A673 (cell line): ENCODE measurements at regions of chr4 and their contacts with region 1.

Region 1: DNA sequence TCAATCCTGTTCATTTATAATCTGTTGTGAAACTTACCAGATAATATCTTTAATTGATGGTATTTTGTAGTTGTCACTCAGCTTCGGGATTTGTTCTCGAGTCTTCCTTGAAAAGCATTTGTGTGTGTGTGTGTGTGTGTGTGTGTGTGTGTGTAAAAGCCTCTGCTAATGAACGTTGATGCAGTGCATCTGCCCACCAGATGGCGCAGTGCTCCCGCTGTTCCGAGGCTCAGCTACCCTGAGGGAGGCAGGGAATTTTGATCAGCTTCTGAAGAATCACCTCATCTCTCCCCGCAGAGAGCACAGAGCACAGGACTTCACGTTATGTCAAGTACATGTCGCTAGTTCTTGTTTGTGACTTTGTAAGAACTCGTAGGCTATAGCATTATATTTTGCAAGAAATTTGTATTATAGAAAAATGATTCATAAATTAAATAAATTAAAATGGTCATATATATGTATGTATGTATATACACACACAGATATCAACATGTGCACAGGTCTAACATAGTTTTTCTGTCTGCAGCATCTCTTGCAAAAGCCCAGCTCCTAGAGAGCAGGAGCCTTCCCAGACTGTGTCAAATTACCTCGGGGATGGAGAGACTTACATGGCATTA is 316.7 kb upstream of the IGFBP7 start:
- DNase-seq: peak; percentile 50
- H3K4me3 ChIP-seq: no peak overlapping the region
- H3K27ac ChIP-seq: no peak overlapping the region
- H3K4me1 ChIP-seq: no peaks in the 10 kb centered on the region
- H3K27me3 ChIP-seq: no peaks in the 10 kb centered on the region
- CTCF ChIP-seq: peak; percentile 67

Region 2: DNA sequence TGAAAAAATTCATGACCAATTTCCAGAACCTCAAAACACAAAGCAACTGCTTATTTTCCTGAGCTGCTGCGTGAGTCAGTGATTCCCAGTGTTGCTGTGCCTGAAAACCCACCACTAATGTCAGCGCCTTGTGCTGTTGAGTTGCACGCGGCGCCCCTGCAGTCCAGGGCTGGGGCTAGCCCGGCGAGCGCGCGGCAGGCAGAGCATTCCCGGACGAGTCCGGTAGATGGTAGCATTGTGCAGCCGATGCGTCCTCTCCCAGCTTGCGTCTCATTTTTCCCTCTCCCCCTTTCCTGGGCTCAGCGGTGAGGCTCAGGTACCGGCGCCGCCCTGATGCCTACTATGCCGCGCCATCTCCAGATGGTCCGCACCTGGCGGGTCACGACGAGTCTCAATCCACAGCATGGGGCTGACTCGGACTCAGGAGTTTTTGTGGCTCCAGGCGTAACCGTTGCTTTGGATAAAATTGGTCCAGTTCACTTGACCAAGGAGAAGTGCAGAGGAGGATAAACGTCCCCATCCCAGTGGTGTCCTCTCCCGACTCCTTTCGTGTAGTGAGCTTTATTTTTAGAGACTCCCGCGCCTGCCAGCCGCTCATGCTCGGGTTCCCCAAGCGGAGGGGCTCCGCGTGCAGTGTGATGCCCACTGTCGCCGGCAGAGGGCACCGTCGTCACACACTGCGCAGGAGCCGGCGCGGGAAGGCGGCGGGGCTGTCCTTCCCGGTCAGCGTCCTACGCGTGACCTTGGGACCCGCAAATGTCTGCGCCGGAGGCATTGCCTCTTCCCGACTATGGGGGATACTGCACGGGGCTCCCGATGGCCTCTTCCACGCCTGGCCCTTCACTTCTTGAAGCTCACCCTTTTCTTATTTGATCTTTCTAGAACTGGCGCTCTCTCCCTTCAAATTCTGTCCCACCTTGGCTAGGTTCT is 263.1 kb before region 1 on chr4:
- CTCF ChIA-PET with region 1: no interaction called
- POLR2A ChIA-PET with region 1: no interaction called
- intact Hi-C with region 1: loop called (anchors 10 kb)
- DNase-seq: peak; percentile 72
- H3K4me3 ChIP-seq: peak overlapping the region; percentile 43
- H3K27ac ChIP-seq: no peak overlapping the region
- H3K4me1 ChIP-seq: no peaks in the 10 kb centered on the region
- H3K27me3 ChIP-seq: peaks cover 3% of the 10 kb centered on the region
- CTCF ChIP-seq: peak; percentile 64

Region 3: DNA sequence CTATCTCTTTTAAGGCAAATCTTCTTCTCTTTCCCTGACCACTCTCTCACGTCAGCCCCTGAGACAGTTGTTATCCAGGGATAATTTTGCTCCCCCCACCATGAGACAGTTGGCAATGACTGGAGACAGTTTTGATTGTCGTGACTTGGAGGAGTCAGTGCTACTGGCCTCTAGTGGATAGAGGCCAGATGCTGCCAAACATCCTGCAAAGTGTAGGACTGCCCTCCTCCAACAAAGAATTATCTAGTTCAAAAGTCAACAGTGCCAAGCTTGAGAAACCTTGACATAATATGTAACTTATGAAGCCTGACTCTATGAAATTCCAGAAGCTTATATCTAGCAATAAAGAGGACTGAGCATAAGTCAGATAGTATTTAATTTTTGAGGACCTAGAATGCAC is 185.4 kb after region 1 on chr4:
- CTCF ChIA-PET with region 1: no interaction called
- POLR2A ChIA-PET with region 1: no interaction called
- intact Hi-C with region 1: no loop called
- DNase-seq: no peak
- H3K4me3 ChIP-seq: no peak overlapping the region
- H3K27ac ChIP-seq: no peak overlapping the region
- H3K4me1 ChIP-seq: no peaks in the 10 kb centered on the region
- H3K27me3 ChIP-seq: no peaks in the 10 kb centered on the region
- CTCF ChIP-seq: no peak